ENCODE measurements at regions of chr17 and their contacts with region 1.

Region 1: DNA sequence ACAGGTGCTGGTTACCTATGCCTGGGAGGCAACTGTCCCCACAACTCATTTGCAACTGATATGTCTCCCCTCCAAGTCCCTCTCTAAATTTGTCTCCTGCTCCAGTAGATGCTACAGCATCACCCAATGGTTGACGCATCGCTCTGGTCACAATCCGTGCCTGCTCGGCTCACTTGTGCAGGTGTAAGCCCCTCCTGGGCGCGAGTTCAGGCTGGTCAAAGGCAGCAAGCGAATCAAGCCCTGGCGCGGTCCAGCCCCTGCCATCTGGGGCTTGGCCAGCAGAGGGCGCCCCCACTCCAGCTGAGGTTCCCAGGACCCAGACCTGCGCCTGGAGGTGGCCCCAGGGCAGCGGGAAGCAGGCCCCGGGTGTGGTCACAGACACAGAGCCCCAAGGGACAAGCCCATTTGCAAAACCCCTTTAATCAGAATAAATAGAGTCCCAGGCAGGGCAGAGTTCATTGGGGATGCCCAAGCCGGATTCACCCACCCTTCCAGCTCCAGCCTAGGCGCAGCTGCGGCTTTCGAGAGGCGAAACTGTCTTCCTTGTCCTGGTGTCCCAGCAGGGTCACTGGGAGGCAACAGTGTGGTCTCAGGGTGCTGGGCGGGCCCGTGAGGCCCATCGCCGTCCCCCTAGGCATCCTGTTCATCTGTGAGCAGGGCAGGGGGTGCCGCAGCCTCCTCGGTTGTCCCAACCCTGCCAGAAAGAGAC is 15.9 kb downstream of the TMC6 start:
- DNase-seq: peak; percentile 65
- H3K4me3 Mint-ChIP-seq: no peak overlapping the region
- H3K27ac Mint-ChIP-seq: no peak overlapping the region
- H3K4me1 Mint-ChIP-seq: peaks cover 5% of the 10 kb centered on the region
- H3K27me3 Mint-ChIP-seq: peaks cover 11% of the 10 kb centered on the region
- CTCF ChIP-seq: peak; percentile 99

Region 2: DNA sequence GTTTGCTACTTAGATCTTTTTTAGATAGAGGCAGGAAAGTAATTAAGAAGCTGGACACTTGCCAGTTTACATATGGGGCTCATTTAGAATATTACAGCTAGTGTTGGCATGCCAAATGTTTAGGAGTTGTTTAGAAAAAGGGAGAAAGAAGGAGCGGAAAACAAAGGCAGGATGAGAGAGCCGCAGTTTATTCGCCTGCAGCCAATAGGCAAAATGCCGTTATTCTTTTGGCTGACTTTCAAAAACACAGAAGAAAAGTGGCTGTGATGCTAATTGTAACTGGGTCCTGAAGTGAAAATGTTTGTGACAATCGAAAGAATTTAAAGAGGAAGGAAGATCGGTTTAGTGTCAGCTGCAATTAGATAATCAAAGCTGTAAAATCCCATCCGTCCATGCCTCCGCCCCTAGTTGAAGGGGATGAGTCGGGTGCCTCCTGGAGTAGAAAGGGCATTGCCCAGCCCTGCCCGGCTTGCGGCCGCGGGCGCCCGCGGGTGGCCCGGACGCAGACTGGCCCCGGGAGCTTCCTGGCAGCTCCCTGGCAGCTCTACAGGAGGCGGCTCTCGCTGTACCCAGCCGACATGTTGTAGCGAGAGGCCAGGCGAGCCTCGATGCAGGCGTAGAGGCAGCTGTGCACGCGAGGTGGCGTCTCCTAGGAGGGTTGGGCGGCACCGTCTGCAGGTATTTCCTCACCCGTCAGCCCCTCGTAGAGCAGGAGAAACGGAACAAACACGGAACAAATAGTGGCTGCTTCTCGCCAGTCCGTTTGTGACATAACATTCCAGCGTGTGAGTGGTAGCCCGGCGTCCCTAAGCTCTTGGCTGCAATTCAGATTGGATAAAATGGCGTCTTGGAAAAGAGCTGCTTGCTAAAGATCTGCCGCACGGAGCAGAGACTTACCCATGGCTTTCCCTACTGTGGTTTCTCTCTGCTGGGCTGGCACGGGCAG is 72.0 kb before region 1 on chr17:
- CTCF ChIA-PET with region 1: no interaction called
- POLR2A ChIA-PET with region 1: no interaction called
- intact Hi-C with region 1: no loop called
- DNase-seq: peak; percentile 77
- H3K4me3 Mint-ChIP-seq: peak overlapping the region; percentile 80
- H3K27ac Mint-ChIP-seq: peak overlapping the region; percentile 97
- H3K4me1 Mint-ChIP-seq: peaks cover 19% of the 10 kb centered on the region
- H3K27me3 Mint-ChIP-seq: no peaks in the 10 kb centered on the region
- CTCF ChIP-seq: no peak

Region 3: GRCh38 chr17:78176548-78177025 is 63.9 kb after region 1 on chr17:
- CTCF ChIA-PET with region 1: interaction called, 19 read pairs
- POLR2A ChIA-PET with region 1: interaction called, 5 read pairs
- intact Hi-C with region 1: loop called (anchors 1 kb)
- DNase-seq: peak; percentile 55
- H3K4me3 Mint-ChIP-seq: no peak overlapping the region
- H3K27ac Mint-ChIP-seq: no peak overlapping the region
- H3K4me1 Mint-ChIP-seq: peaks cover 17% of the 10 kb centered on the region
- H3K27me3 Mint-ChIP-seq: no peaks in the 10 kb centered on the region
- CTCF ChIP-seq: peak; percentile 88